GM12878 (cell line): ENCODE measurements at regions of chr10 and their contacts with region 1.

Region 1: GRCh38 chr10:60778214-60779029 is at the start of gene CDK1:
- DNase-seq: peak; percentile 89
- ATAC-seq: peak; percentile 97
- H3K4me3 ChIP-seq: peak within 1 kb of the TSS; percentile 98
- H3K27ac ChIP-seq: peak within 1 kb of the TSS; percentile 82
- H3K4me1 ChIP-seq: peaks cover 3% of the 10 kb centered on the region; the same call in 1 of the 2 replicates
- H3K27me3 ChIP-seq: no peaks in the 10 kb centered on the region
- CTCF ChIP-seq: no peak
- EP300 ChIP-seq: 0 out of 4 replicates have a peak, but pooled peaks of 1 of the 2 experiments have one; percentile 24
- POLR2A ChIP-seq: peak; percentile 91
- RAD21 ChIP-seq: no peak
- polyA plus RNA-seq, gene CDK1: 228 to 361 TPM

Region 2: DNA sequence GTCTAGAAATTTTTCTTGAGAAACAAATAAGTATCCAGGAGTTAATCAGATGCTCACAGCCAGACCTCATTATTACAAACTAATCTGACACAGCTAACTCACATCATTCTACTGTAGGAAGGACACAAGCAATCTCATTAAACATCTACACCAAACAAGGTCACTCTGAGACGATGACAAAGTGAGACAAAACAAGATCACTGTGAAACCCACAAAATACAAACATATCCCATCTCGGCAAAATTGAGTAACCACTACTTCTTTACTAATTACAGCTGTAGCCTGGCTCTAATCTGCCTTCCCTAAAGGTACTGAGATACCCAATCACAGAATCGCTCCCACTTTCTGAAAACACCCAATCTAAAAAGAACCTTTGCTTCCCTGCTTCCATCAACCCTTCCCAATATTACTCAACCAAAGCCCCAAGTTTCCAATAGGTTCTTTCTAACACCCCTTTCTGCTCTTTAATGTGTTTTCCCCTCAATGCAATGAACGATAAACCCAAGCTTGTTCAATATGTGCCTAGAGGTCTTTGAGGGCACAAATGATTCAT is 899.0 kb before region 1 on chr10:
- CTCF ChIA-PET with region 1: no interaction called
- POLR2A ChIA-PET with region 1: no interaction called
- RAD21 ChIA-PET with region 1: no interaction called
- SMC1A ChIA-PET with region 1: no interaction called
- in situ Hi-C with region 1: no loop called
- intact Hi-C with region 1: loop called (anchors 2 kb)
- DNase-seq: no peak
- ATAC-seq: peak; percentile 54
- H3K4me3 ChIP-seq: peak overlapping the region; percentile 46; the same call in 1 of the 2 replicates
- H3K27ac ChIP-seq: peak overlapping the region; percentile 77
- H3K4me1 ChIP-seq: peaks cover 50% of the 10 kb centered on the region
- H3K27me3 ChIP-seq: no peaks in the 10 kb centered on the region
- CTCF ChIP-seq: no peak
- EP300 ChIP-seq: no peak
- POLR2A ChIP-seq: no peak
- RAD21 ChIP-seq: no peak

Region 3: DNA sequence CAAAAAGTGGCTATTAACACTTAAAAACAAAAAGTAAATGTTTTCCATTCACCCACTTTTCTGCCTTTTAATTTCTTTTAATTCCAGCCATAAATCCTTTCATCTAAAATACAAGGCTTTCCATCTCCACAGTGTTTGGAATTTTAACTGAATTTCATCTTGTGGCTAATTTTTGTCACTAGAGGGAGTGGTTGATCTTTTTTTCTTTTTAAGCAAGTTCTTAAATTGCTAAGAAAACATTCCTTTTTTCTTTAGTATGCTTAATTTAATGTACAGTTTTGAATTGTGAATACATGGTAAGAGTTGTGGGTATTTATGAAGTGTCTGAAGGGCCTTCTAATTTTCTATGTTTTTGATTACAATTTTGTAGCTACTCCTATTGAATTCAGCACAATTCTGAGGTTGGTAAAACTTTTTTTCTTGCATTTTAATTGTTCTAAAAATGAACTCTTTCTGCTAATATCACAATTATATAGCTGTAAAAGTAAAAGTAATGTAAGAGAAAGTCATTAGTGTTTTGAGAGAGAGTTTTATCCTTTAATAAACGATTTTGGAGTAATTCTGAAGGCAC is 333.8 kb before region 1 on chr10:
- CTCF ChIA-PET with region 1: no interaction called
- POLR2A ChIA-PET with region 1: no interaction called
- RAD21 ChIA-PET with region 1: no interaction called
- SMC1A ChIA-PET with region 1: no interaction called
- in situ Hi-C with region 1: no loop called
- intact Hi-C with region 1: loop called (anchors 5 kb)
- DNase-seq: no peak
- ATAC-seq: no peak
- H3K4me3 ChIP-seq: no peak overlapping the region
- H3K27ac ChIP-seq: no peak overlapping the region
- H3K4me1 ChIP-seq: no peaks in the 10 kb centered on the region
- H3K27me3 ChIP-seq: no peaks in the 10 kb centered on the region
- CTCF ChIP-seq: no peak; a peak in 1 of 6 replicates
- EP300 ChIP-seq: no peak
- POLR2A ChIP-seq: no peak
- RAD21 ChIP-seq: peak; percentile 30; the same call in 1 of the 2 replicates